Psoas muscle (tissue), 8 donors: ENCODE measurements at regions of chr7 and their contacts with region 1.

Region 1: DNA sequence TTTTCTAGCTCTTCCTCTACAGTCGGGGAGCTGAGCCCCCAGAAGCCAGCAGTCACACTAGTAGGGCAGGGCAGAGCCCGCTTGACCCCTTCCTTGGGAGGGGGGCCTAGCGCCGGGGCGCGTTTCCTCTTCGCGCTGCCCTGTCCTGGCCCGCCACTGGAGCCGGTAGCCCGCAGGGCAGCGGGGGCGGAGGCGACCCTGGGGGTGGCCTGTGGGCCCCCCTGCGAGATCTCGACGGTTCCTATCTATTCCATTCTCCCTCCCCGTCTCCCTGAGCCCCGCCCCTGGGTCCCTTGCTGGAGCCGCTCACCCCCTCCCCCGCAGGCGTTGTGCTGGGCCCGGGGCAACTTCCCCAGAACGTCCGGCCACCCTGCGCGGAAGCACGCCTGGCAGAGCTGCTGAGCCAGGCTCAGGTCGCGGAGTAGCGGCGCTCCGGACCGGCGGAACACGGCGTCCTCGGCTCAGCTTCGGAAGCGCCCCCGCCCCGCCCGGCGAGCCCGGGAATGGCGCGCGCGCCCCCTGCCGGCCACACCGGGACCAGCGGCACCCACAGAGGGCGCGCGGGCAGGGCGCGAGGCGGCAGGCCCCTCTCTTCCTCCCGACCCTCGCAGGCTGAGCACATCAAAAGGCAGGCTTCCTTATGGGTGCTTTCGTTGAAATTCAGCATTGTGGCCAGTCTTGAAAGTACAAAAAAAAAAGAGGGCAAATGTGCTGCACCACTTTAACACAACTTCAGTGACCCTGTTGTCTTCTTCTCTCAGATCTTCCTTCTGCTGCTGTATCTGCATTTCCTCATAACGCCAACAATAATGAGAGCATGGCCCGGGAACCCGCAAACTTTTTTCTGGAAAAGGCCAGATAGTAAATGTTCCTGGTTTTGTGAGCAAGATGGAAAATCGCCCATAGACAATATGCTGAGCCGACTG is 327.6 kb downstream of the TNS3 start:
- DNase-seq: peak; percentile 89 to 95
- ATAC-seq: peak; percentile 91 to 97 (median 93)
- H3K4me3 ChIP-seq: peak overlapping the region; percentile 69
- H3K27ac ChIP-seq: peak overlapping the region; percentile 83
- H3K4me1 ChIP-seq: peaks cover 6% of the 10 kb centered on the region
- H3K27me3 ChIP-seq: no peaks in the 10 kb centered on the region
- CTCF ChIP-seq: peak; percentile 98

Region 2: GRCh38 chr7:45923290-45923689 is 1331.1 kb before region 1 on chr7:
- intact Hi-C with region 1: loop called in 1 of 2 experiments (anchors 5 kb)
- DNase-seq: peak; percentile 73 to 83
- ATAC-seq: peak in 3 of 4 donors; percentile 60 to 74 (median 63)
- H3K4me3 ChIP-seq: peak overlapping the region; percentile 65
- H3K27ac ChIP-seq: no peak overlapping the region
- H3K4me1 ChIP-seq: peaks cover 9% of the 10 kb centered on the region
- H3K27me3 ChIP-seq: peaks cover 0 to 53% (median 16%) of the 10 kb centered on the region in 3 donors
- CTCF ChIP-seq: peak; percentile 85

Region 3: GRCh38 chr7:47179812-47180515 is 74.4 kb before region 1 on chr7:
- intact Hi-C with region 1: loop called in 1 of 2 experiments (anchors 5 kb)
- DNase-seq: peak in 1 of 2 donors; percentile 36
- ATAC-seq: peak; percentile 63 to 81 (median 78)
- H3K4me3 ChIP-seq: no peak overlapping the region
- H3K27ac ChIP-seq: no peak overlapping the region
- H3K4me1 ChIP-seq: peaks cover 39% of the 10 kb centered on the region
- H3K27me3 ChIP-seq: no peaks in the 10 kb centered on the region
- CTCF ChIP-seq: peak; percentile 86

Region 4: DNA sequence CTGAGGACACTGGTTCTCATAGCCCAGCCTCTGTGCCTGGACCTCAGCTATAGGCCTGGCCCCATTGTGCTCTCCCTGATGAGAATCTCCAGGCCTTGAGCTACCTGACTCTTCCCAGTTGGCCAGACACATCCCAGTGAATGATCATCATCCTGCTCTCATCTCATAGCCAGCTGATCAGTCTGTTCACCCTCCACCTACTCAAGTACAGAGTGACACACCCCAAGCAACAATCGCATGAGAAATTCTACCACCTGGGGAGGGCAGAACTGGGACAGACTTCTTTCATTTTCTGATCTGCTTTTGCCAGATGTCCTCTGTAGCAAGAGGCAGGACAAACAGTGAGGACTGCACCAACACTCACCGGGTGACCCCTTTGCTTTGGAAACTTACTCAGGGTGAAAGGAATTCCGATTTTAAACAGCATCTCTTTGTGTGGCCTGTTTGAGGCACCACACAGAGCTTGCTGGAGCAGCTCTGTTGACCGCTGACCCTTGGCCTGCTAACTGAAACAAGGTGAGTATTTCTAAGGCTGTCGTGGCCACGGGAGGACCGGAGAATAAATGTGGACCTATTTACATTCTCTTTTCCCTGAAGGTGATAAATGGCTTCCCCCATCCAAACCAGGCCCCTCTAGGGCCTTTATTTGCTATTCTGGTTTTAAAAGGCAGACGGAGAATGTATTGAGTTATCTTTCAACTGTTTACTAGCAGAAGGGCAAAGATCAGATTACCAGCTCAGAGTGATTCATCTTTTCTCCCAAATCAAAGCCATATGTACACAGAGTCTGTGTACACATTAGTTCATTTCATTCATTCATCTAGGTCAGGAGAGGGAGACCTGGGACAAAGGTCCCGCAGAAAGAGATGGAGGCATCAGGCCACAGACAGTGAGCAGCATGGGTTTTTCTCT is 509.0 kb after region 1 on chr7:
- intact Hi-C with region 1: no loop called
- DNase-seq: no peak
- ATAC-seq: peak in 1 of 4 donors; percentile 37
- H3K4me3 ChIP-seq: no peak overlapping the region
- H3K27ac ChIP-seq: no peak overlapping the region
- H3K4me1 ChIP-seq: peaks cover 2% of the 10 kb centered on the region
- H3K27me3 ChIP-seq: no peaks in the 10 kb centered on the region
- CTCF ChIP-seq: no peak